Panc1 (cell line): ENCODE measurements at regions of chr10 and their contacts with region 1.

Region 1: DNA sequence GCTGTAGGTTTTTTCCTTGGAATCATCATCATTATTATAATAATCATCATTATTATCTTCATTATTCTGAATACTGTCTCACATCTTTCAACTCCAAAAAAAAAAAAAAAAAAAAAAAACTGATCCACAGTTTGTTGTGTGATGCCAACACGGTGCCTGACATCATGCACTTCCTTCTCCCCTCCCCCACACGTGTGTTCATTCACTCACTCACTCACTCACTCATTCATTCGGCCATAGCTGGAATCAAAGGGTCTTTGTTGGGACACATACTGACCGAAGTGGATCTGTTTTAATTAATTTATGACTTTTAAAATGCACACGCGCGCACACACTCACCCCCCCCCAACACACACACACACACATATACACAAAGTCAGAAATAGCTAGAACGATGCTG is 177.8 kb downstream of the PIP4K2A start:
- DNase-seq: no peak
- ATAC-seq: no peak
- H3K4me3 ChIP-seq: no peak overlapping the region
- H3K27ac ChIP-seq: no peak overlapping the region
- H3K4me1 ChIP-seq: no peaks in the 10 kb centered on the region
- H3K27me3 ChIP-seq: no peaks in the 10 kb centered on the region
- CTCF ChIP-seq: no peak

Region 2: DNA sequence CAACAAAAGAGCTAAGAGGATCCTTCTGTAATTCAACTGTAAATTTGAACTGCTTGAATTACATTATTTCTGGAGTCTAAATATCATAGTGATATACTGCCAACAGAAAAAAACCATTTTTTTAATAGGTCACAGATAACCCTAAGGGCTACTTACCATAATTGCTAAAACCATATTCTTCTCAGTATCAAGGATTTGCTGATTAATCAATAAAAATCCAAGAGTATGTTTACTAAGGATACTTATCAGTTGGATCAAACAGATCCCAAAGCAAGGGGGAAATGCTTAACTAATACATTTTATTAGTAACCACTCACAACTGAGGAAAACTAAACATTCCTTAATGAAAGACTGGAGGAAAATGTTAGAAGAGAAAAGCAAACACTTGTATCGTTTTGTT is 11.7 kb after region 1 on chr10:
- CTCF ChIA-PET with region 1: interaction called, 10 read pairs
- POLR2A ChIA-PET with region 1: no interaction called
- in situ Hi-C with region 1: no loop called
- intact Hi-C with region 1: no loop called
- DNase-seq: no peak
- ATAC-seq: no peak
- H3K4me3 ChIP-seq: no peak overlapping the region
- H3K27ac ChIP-seq: no peak overlapping the region
- H3K4me1 ChIP-seq: no peaks in the 10 kb centered on the region
- H3K27me3 ChIP-seq: no peaks in the 10 kb centered on the region
- CTCF ChIP-seq: no peak

Region 3: DNA sequence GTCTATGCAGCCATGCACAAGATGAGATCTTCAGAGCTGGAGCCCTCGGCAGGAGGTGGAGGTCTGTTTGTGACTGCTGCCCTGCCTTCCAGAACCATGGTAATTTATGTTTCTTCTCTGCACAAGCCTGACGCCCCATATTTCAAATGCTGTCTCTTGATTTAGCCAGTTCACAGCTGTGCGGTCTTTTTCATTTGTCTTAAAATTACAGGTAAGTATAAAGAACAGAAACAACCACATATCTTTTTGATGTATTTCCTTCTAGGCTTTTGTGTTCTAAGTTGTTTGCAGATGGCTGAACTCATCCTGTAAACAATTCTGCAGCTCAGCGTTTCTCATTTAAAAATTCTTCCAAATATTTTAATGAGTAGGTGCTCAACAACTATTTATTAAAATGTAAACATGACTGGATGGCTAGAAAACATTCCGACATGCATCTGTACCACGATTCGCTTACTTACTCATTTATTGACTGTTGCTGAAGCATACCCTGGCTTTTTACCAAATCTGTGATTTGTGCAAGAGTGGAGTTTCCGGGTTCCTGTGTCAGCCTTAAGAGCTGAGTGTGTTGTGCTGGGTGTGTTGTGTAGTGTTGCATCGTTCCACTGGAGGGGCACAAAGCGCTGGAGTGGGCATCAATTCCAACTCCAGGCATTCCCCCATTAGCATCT is 118.8 kb after region 1 on chr10:
- CTCF ChIA-PET with region 1: no interaction called
- POLR2A ChIA-PET with region 1: no interaction called
- in situ Hi-C with region 1: no loop called
- intact Hi-C with region 1: no loop called
- DNase-seq: peak; percentile 81
- ATAC-seq: peak; percentile 58; the same call in 1 of the 2 replicates
- H3K4me3 ChIP-seq: no peak overlapping the region
- H3K27ac ChIP-seq: no peak overlapping the region
- H3K4me1 ChIP-seq: peaks cover 5% of the 10 kb centered on the region
- H3K27me3 ChIP-seq: no peaks in the 10 kb centered on the region
- CTCF ChIP-seq: no peak